ENCODE measurements at regions of chr3 and their contacts with region 1.

Region 1: DNA sequence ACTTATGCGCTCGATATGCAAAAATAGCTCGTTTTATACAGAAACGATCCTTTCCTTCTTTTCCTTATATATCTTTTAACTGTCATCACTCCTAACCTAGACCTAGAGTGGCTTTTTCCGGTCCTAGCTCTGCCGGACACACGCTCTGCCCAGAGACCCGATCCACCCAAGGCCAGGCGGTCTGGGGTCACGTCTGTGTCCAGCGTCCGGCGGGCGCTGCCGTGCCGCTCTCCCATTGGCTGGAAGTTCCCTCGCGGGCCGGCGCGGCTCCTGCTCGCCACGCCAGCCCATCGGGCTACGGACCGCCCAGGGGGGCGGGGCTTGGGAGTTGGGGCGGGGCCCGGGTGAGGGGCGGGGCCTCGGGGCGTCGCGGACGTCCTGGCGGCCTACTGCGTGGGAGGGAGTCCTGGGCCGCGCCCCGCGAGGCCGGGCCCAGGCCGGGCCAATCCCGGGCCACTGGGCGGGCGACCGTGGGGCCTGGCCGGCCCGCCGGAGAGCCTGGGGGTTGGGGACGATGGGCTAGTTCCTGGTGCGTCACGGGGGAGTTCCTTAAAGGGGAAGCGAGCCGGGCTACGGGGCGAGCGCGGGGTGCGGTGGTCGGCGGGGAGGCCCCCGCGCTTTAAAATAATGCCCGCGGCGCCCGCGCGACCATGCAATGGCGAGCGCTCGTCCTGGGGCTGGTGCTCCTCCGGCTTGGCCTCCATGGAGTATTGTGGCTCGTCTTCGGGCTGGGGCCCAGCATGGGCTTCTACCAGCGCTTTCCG is at the start of gene EDEM1:
- DNase-seq: peak; percentile 95
- ATAC-seq: peak; percentile 97
- total RNA-seq, gene EDEM1: 9.2 to 16.8 TPM

Region 2: GRCh38 chr3:5122030-5122740 is 65.2 kb before region 1 on chr3 and contains the start of gene ARL8B:
- intact Hi-C with region 1: loop called (anchors 2 to 10 kb)
- DNase-seq: peak; percentile 93
- ATAC-seq: peak; percentile 99 to 100
- total RNA-seq, gene ARL8B: 54.5 to 57.7 TPM

Region 3: GRCh38 chr3:5463991-5464390 is 276.7 kb after region 1 on chr3:
- intact Hi-C with region 1: no loop called
- DNase-seq: no peak
- ATAC-seq: no peak

Measured in left cardiac atrium (tissue), 4 donors.